ENCODE measurements at regions of chr4 and their contacts with region 1.

Region 1: DNA sequence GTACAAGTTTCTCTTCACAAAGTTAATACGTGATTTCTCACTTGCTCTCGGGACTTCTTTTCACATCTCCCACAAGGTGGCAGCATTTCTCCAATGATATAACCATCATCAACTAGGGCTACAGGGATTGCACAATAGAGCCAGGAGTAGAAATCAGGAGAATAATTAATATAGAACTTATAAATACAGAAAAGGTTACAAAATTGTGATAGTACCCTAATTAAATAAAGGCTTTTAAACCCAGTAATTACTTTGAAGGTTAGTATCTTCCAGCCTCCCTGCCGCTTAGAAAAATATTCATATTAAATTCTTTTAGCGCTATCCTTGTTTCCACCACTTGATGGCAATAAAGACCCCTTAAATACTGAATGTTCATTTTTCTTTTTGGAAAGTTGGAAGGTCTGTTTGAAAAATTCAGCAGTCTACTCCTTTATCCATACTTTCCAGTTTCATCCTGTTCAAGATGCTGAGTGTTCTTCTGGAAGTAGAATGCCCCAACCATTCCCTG is 65.8 kb downstream of the RASGEF1B start:
- DNase-seq: peak; percentile 57
- H3K4me3 ChIP-seq: peak overlapping the region in 1 of 2 donors; percentile 25
- H3K27ac ChIP-seq: no peak overlapping the region
- H3K4me1 ChIP-seq: no peaks in the 10 kb centered on the region
- H3K27me3 ChIP-seq: no peaks in the 10 kb centered on the region
- CTCF ChIP-seq: peak; percentile 67 to 77 (median 74)
- POLR2A ChIP-seq: no peak

Region 2: DNA sequence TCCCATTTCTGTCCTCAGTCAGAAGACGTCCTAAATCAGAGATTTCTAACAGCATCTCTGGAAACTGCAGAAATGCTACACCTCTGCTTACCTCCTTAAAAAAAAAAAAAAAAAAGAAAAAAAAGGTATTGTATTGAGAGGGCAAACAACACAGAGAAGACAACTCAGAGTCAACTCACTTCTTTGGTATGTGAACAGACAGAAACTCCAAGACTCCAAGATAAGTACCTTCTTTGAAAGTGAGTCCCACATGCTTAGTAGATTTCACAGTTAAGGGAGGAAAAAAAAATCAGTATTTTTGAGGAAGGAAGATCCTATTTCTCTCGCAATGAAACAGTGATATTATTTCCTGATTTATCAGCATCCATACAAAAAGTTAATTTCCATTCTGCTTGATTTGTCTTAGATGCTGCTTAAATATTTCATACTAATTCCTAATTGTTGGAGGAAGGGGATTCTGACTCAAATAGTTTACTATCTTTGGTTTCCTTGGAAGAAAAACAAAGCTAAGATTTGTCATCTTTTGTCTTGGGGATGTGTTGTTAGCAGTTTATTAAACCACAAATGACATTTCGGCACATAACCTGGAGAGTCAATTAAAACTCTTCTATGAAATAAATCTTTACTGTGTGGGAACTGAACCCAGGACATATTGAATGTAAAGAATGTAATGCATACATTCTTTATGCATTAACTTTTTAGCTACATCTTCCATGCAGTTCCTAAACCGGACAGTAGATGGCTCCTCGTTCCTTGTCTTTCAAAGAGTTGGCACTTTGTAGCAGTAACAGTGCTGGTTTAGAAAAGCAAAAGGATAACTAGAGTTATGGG is 61.1 kb after region 1 on chr4:
- intact Hi-C with region 1: no loop called
- DNase-seq: peak; percentile 89
- H3K4me3 ChIP-seq: no peak overlapping the region
- H3K27ac ChIP-seq: no peak overlapping the region
- H3K4me1 ChIP-seq: no peaks in the 10 kb centered on the region
- H3K27me3 ChIP-seq: no peaks in the 10 kb centered on the region
- CTCF ChIP-seq: peak; percentile 85 to 91 (median 88)
- POLR2A ChIP-seq: no peak

Region 3: DNA sequence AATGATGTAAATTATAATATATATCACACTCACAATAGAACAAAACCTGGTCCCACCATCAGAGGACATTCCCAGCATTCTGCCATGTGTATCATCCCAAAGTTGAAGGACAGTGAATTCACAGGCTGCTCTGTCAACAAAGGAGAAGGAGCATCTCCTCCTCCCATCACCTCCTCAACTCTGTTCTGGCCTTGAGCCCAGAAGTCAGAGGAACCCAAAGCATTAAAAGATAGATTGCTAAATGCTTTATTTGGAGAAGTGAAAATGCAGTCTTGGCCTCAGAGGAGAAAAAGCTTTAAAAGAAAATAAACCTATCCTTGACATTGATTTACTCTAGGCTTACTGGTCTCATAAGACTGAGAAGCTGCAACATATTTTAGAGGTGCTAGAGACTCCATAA is 334.5 kb after region 1 on chr4:
- intact Hi-C with region 1: no loop called
- DNase-seq: no peak
- H3K4me3 ChIP-seq: no peak overlapping the region
- H3K27ac ChIP-seq: no peak overlapping the region
- H3K4me1 ChIP-seq: no peaks in the 10 kb centered on the region
- H3K27me3 ChIP-seq: no peaks in the 10 kb centered on the region
- CTCF ChIP-seq: no peak
- POLR2A ChIP-seq: no peak

Region 4: GRCh38 chr4:82268050-82268825 is 862.3 kb after region 1 on chr4:
- intact Hi-C with region 1: loop called (anchors 10 kb)
- DNase-seq: peak; percentile 76
- H3K4me3 ChIP-seq: no peak overlapping the region
- H3K27ac ChIP-seq: peak overlapping the region in 1 of 2 donors; percentile 6
- H3K4me1 ChIP-seq: no peaks in the 10 kb centered on the region
- H3K27me3 ChIP-seq: no peaks in the 10 kb centered on the region
- CTCF ChIP-seq: peak; percentile 36 to 80 (median 71)
- POLR2A ChIP-seq: no peak